H1 (cell line): ENCODE measurements at regions of chr13 and their contacts with region 1.

Region 1: GRCh38 chr13:25232937-25233515 is 54.3 kb downstream of the MTMR6 start:
- DNase-seq: no peak
- H3K4me3 ChIP-seq: no peak overlapping the region
- H3K27ac ChIP-seq: no peak overlapping the region
- H3K4me1 ChIP-seq: no peaks in the 10 kb centered on the region
- H3K27me3 ChIP-seq: no peaks in the 10 kb centered on the region
- CTCF ChIP-seq: peak in 2 of 3 experiments; percentile 34 to 52; a peak in 2 of 4 replicates
- EP300 ChIP-seq: no peak
- POLR2A ChIP-seq: no peak
- RAD21 ChIP-seq: peak; percentile 28 to 36; a peak in 3 of 4 replicates

Region 2: GRCh38 chr13:25143706-25144105 is 89.3 kb before region 1 on chr13:
- CTCF ChIA-PET with region 1: no interaction called
- POLR2A ChIA-PET with region 1: no interaction called
- DNase-seq: no peak
- H3K4me3 ChIP-seq: no peak overlapping the region
- H3K27ac ChIP-seq: no peak overlapping the region
- H3K4me1 ChIP-seq: peaks cover 0 to 4% (median 2%) of the 10 kb centered on the region in 4 experiments; a peak in 2 of 7 replicates
- H3K27me3 ChIP-seq: no peaks in the 10 kb centered on the region
- CTCF ChIP-seq: no peak
- EP300 ChIP-seq: no peak
- POLR2A ChIP-seq: no peak
- RAD21 ChIP-seq: no peak

Region 3: GRCh38 chr13:25214491-25215252 is 18.4 kb before region 1 on chr13:
- CTCF ChIA-PET with region 1: interaction called, 16 read pairs
- POLR2A ChIA-PET with region 1: no interaction called
- DNase-seq: no peak
- H3K4me3 ChIP-seq: no peak overlapping the region
- H3K27ac ChIP-seq: no peak overlapping the region
- H3K4me1 ChIP-seq: peaks cover 0 to 6% (median 4%) of the 10 kb centered on the region in 4 experiments; a peak in 2 of 7 replicates
- H3K27me3 ChIP-seq: no peaks in the 10 kb centered on the region
- CTCF ChIP-seq: peak in 2 of 3 experiments; percentile 12 to 23; a peak in 2 of 4 replicates
- EP300 ChIP-seq: no peak
- POLR2A ChIP-seq: no peak
- RAD21 ChIP-seq: 0 out of 4 replicates have a peak, but pooled peaks of 1 of the 2 experiments have one; percentile 13